Tibial artery (tissue), 4 donors: ENCODE measurements at regions of chr14 and their contacts with region 1.

Region 1: DNA sequence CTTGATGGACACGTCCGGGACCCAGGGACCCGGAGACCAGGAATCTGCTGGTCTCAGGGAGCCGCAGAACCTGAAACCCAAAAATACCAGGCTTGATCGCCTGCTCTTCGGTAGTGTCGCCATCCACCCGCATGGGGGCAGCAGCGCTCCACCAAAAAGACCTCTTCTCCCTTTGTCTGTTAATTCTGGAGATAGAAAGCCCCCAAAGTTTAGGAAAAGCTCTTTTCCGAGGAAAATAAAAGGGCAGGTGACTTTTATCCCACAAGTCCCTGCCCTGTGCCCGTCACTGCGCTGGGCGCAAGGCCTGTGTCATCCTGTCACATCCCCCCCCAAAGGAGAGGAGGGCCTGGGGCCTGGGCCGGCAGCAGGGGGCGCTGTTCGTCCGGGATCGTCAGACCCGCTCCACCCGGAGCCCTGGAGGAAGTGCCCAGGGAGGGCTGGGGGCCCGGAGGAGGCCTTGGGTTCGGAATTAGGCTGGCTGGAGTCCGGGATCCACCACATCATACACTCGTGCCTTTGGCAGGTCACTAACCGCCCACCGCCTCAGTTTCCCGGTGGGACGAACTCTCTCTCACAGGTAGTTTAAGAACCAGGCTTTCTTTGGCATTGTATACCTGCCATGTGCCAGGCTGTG is 31.9 kb downstream of the DAD1 start:
- DNase-seq: peak; percentile 68 to 91
- H3K4me3 ChIP-seq: peak overlapping the region; percentile 27 to 55
- H3K27ac ChIP-seq: peak overlapping the region; percentile 48 to 69
- H3K4me1 ChIP-seq: peaks cover 0 to 28% (median 13%) of the 10 kb centered on the region in 4 donors
- H3K27me3 ChIP-seq: no peaks in the 10 kb centered on the region
- CTCF ChIP-seq: peak; percentile 98 to 100

Region 2: GRCh38 chr14:22386924-22387775 is 170.0 kb before region 1 on chr14:
- intact Hi-C with region 1: loop called (anchors 2 kb)
- DNase-seq: peak in 1 of 2 donors; percentile 60
- H3K4me3 ChIP-seq: no peak overlapping the region
- H3K27ac ChIP-seq: peak overlapping the region in 1 of 2 donors; percentile 13
- H3K4me1 ChIP-seq: peaks cover 0 to 11% (median 5%) of the 10 kb centered on the region in 4 donors
- H3K27me3 ChIP-seq: peaks cover 0 to 6% of the 10 kb centered on the region in 2 donors
- CTCF ChIP-seq: peak; percentile 75 to 82

Region 3: DNA sequence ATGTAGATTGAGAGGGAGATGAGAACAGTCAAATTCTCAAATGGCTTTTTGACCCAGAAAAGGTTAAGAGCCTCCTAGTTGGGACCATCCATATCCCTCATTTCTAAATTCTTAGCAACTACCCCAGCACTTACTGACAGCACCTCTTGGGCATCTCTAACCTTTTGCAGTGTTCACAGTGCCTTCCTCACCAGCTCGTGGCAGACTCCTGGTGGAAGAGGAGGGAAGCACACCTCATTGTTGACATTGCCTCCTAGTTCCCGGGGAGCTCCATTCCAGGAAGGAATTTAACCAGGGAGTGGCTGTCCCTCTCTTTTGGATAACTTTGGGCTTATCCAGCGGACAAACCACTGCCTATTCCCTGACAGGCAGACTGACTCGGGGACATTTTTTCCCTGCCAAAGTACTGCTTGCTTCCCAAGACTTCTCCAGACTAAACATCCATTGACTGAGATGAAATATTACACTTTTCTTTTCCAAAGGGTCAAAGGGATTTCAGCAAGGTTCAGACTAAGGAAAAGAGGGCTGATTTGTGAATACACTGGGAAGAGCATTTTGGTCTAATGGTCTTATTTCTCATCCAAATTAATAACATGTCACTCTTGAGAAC is 96.0 kb after region 1 on chr14:
- intact Hi-C with region 1: loop called (anchors 5 kb)
- DNase-seq: peak; percentile 40 to 72
- H3K4me3 ChIP-seq: no peak overlapping the region
- H3K27ac ChIP-seq: no peak overlapping the region
- H3K4me1 ChIP-seq: peaks cover 0 to 20% (median 9%) of the 10 kb centered on the region in 4 donors
- H3K27me3 ChIP-seq: no peaks in the 10 kb centered on the region
- CTCF ChIP-seq: peak; percentile 67 to 73

Region 4: DNA sequence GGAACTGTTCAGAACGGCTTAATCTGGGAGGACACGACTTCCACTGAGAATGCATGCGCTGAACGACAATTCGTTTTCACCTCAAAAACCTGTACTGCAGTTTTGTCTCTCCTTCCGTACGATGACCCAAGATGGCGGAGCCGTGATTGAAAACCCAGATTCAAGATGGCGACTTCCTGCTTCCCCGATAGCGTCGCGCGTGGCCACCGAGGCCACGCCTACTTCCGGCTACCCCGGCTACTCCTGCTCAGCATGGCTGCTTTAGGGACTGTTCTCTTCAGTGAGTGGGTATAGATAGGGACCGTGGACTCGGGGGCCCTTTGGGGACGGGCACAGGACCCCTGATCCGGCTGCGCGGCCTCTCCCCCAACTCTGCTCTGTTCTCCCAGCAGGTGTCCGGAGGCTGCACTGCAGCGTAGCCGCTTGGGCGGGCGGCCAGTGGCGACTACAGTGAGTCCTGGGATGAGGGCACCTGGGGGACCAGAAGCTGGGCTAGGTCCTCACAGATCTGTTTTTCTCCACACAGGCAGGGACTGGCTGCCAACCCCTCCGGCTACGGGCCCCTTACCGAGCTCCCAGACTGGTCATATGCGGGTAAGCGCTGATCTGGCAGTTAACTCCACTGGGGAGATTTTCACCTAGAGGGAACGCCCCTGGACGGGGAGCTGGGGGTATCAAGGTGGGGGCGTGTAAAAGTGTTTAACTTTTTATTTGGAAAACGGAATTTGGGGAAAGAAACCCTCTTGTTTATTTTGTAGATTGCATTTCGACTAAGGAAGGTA is 272.7 kb after region 1 on chr14 and contains the start of gene MRPL52:
- intact Hi-C with region 1: loop called (anchors 10 kb)
- DNase-seq: peak; percentile 90 to 94
- H3K4me3 ChIP-seq: peak within 1 kb of the TSS; percentile 67 to 90
- H3K27ac ChIP-seq: peak within 1 kb of the TSS; percentile 77 to 81
- H3K4me1 ChIP-seq: peaks cover 0 to 10% (median 9%) of the 10 kb centered on the region in 4 donors
- H3K27me3 ChIP-seq: no peaks in the 10 kb centered on the region
- CTCF ChIP-seq: no peak

Region 5: DNA sequence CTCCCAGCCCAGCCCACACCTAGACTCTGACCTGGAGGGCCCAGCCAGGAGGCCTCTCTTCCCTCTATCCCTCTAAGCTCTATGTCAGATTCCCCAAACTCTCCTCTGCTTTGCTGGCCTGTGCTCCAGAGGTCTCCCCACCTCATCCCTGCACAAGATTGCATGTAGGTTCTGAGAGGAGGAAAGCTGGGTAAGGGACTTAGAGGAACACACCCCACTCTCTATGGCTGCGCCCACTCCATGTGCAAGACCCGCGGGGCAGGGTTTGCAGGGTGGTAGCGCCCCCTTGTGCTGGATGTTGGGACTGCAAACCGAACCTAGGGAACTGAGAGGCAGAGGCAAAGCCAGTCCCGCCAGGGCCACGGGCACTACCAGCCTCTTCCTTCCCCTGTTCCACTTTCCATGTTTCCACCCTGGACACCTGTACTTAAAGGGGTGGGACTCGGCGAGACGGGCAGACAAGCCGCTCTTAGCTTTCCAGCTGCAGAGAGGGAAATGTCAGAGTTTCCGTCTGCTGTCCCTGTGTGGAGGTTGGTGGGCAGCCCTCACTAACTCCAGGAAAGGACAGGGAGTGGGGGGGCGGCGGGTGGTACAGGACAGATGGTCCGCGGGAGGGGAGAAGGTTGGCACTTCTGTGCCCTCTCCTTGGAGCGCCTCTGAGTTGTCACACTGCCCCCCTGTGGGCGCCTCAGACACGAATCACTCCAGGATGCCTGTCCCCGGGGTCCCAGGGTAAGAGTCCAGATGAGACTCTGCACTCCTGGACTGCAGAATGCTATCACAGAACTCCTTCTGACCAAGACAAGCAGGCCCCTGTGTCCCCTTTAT is 296.0 kb after region 1 on chr14:
- intact Hi-C with region 1: loop called (anchors 10 kb)
- DNase-seq: peak; percentile 94 to 95
- H3K4me3 ChIP-seq: peak overlapping the region; percentile 28 to 42
- H3K27ac ChIP-seq: peak overlapping the region; percentile 92 to 97
- H3K4me1 ChIP-seq: peaks cover 5 to 55% (median 52%) of the 10 kb centered on the region in 4 donors
- H3K27me3 ChIP-seq: no peaks in the 10 kb centered on the region
- CTCF ChIP-seq: peak; percentile 81 to 96